Activated CD8-positive, alpha-beta memory T cell treated with anti-CD3 and anti-CD28 coated beads, Interleukin-2, amount 10 ng/mL, durations not matched to agents 7 days and 5 days (primary cell): ENCODE measurements at regions of chr11 and their contacts with region 1.

Region 1: DNA sequence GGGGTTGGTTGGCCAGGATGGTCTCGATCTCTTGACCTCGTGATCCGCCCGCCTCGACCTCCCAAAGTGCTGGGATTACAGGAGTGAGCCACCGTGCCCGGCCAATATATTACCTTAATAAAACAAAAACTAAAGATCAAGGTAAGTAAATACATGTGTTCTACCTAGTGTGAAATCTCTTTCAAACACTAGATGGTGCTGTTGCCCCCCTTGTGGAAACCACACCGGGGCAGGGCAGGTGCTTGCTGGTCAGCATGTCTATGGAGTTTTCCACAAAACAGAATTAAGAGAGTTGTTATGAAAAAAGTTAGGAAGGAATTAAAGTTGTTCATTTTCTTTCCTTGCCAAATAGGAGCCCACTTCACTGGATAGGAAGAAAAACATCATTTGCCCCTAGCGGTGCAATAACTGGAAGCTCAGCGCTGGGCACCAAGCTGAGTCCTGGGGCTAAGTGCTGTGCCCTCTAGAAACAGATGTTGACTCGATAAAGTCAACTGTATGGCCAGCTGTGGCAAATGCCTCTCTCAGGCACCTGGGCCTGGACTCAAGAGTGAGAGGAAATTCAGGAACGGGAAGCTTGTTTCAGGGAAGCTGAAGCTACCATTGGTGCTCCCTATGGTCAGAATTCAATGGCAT is 6.3 kb upstream of the KCNJ5 start:
- DNase-seq: peak; percentile 71
- ATAC-seq: peak; percentile 82
- H3K4me3 Mint-ChIP-seq: no peak overlapping the region
- H3K27ac Mint-ChIP-seq: no peak overlapping the region
- H3K4me1 Mint-ChIP-seq: peaks cover 7% of the 10 kb centered on the region
- H3K27me3 Mint-ChIP-seq: peaks cover 72% of the 10 kb centered on the region

Region 2: GRCh38 chr11:128868841-128869580 is 15.8 kb before region 1 on chr11:
- CTCF ChIA-PET with region 1: interaction called, 25 read pairs
- DNase-seq: peak; percentile 59
- ATAC-seq: peak; percentile 55
- H3K4me3 Mint-ChIP-seq: no peak overlapping the region
- H3K27ac Mint-ChIP-seq: no peak overlapping the region
- H3K4me1 Mint-ChIP-seq: no peaks in the 10 kb centered on the region
- H3K27me3 Mint-ChIP-seq: peaks cover 6% of the 10 kb centered on the region

Region 3: DNA sequence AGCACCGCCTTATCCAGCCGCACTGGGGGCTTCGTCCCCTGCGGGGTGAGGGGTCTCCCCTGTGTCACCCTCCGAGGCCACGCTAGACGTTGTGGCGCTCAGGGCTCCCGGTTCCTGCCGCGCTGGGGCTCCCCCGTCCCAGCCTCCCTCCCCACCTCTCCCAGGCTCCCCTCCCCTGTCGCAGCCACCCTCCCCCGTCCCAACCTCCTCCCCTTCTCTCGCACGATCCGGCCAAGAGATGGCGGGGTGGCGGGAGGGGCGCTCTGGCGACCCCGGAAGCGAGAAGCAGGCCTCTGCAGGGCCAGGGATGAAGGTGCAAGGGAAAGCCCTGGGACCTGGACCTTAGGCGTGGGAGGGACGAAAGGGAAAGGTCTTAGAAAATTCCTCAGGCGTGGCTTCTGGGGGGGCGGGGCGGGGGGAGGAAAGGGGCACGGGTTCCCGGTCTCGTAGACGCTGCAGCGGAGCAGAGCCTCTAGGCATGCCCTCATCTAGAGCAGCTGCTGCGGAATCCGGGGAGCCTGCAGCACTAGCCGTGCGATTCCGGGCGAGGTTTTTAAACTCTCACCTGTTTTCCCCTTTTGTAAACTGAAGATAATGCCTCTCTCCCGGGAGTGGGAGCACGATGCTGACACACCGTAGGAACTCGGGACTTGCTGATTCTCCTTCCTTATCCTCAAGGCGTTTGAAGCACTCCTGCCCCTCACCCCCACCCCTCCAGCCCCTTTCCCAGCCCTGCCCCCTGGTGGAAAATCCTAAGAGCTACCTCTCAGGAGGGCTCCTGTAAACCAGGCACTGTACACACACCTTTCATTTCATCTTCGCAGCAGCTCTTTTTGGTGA is 20.7 kb after region 1 on chr11:
- CTCF ChIA-PET with region 1: interaction called, 17 read pairs
- DNase-seq: peak; percentile 52
- ATAC-seq: peak; percentile 68
- H3K4me3 Mint-ChIP-seq: peak overlapping the region; percentile 58
- H3K27ac Mint-ChIP-seq: no peak overlapping the region
- H3K4me1 Mint-ChIP-seq: peaks cover 15% of the 10 kb centered on the region
- H3K27me3 Mint-ChIP-seq: peaks cover 53% of the 10 kb centered on the region

Region 4: DNA sequence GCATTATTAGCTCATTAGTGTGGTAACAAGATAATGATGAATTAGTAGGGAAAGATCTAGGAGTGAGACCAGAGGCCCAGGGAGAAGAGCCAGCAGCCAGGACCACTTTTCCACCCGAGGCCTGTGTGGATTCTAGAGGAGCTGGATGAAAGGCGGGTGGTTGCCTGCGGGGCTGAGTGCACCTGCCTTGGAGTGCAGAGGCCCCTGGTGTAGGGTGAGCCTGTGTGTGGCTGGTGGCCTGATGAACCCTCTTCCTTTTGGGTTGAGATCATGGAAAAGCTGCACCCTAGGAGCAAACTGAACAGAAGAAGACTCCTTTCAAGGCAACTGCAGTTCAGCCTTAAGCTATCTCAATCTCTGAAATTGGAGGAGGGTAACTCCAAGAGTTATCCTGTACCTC is 63.8 kb after region 1 on chr11:
- CTCF ChIA-PET with region 1: interaction called, 141 read pairs
- DNase-seq: no peak
- ATAC-seq: no peak
- H3K4me3 Mint-ChIP-seq: no peak overlapping the region
- H3K27ac Mint-ChIP-seq: no peak overlapping the region
- H3K4me1 Mint-ChIP-seq: no peaks in the 10 kb centered on the region
- H3K27me3 Mint-ChIP-seq: peaks cover 37% of the 10 kb centered on the region

Region 5: GRCh38 chr11:128981254-128981653 is 96.4 kb after region 1 on chr11:
- CTCF ChIA-PET with region 1: interaction called, 11 read pairs
- DNase-seq: no peak
- ATAC-seq: no peak
- H3K4me3 Mint-ChIP-seq: no peak overlapping the region
- H3K27ac Mint-ChIP-seq: no peak overlapping the region
- H3K4me1 Mint-ChIP-seq: peaks cover 9% of the 10 kb centered on the region
- H3K27me3 Mint-ChIP-seq: peaks cover 12% of the 10 kb centered on the region